HCT116 (cell line): ENCODE measurements at regions of chr12 and their contacts with region 1.

Region 1: DNA sequence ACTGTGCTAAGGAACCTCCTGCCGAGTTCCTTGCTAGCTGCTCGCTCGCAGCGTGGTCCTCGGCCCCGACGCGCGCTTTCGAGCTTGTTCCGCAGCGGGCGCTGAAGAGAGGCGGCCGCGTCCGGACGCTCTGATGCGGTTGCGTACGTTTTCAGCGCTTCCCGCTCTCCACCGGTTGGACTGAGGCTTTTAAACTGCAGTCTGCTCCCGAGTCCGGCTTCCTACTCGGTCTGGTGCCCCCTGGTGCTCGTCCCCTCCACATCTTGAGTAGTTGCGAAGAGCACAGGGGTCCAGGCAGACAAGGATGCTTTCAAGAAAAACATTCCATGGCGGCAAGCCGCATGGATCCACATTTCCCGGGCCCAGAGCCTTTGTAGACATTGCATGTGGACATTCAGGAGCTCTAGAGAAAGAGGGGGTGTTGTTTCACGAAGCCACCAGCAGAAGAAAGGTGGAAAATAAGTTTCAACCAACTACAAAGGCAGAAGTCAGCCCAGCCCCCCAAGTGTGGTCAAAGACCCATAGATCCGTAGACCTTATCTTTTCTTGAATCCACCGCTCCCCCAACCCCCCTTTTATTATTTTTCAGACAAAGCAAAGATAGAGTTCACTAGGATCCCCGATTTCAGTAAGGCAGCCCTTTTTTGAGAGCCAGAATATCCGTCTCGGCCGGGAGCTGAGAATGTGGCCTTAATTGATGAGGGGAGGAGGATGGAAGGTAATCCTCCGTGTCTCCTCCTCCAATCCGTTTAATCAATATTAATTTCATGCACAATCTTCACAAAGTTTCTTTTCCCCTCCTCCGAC is 984 bp upstream of the WNK1 start:
- DNase-seq: peak; percentile 93
- ATAC-seq: peak; percentile 67
- H3K4me3 ChIP-seq: peak overlapping the region; percentile 46 to 75
- H3K27ac ChIP-seq: peak overlapping the region; percentile 62
- H3K4me1 ChIP-seq: peaks cover 15 to 35% of the 10 kb centered on the region in 2 experiments; a peak in 3 of 4 replicates
- H3K27me3 ChIP-seq: no peaks in the 10 kb centered on the region
- CTCF ChIP-seq: peak; percentile 68 to 81 (median 78)
- POLR2A ChIP-seq: peak; percentile 49
- RAD21 ChIP-seq: peak; percentile 77

Region 2: DNA sequence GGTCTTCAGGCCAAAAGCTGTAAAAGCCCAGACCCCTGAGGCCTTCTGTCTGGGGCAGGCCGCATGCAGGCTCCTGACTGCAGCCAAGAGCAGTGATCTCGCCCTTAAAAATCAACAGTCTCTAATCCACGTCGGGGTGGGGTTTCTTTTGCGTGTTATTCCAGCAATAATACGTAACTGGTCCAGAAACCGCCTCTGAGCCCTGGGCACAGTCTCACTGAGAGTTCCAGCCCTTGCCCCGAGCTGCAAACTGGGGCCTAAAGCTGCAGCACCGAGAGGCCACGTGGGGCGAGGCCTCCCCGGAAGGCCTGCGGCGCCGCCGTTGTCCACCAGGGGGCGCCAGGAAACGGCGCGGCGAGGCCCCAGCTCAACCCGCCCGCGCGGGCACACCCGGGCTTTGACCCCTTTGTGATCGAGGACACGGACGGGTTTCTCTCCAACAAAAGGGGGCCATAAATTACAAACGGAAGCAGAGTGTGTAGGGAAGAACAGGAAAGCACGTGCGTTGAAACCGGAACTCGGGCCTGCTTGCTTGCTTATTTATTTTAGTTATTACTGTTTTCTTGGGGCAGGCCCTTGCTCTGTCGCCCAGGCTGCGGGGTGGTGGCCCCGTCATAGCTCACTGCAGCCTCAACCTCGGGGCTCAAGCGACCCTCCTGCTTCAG is 175.3 kb before region 1 on chr12:
- CTCF ChIA-PET with region 1: interaction called, 41 read pairs
- POLR2A ChIA-PET with region 1: interaction called, 23 read pairs
- RAD21 ChIA-PET with region 1: interaction called, 3 to 4 read pairs
- intact Hi-C with region 1: loop called (anchors 1 kb)
- DNase-seq: peak; percentile 41
- ATAC-seq: peak; percentile 72
- H3K4me3 ChIP-seq: no peak overlapping the region
- H3K27ac ChIP-seq: peak overlapping the region; percentile 31
- H3K4me1 ChIP-seq: peaks cover 33 to 52% of the 10 kb centered on the region in 2 experiments
- H3K27me3 ChIP-seq: no peaks in the 10 kb centered on the region
- CTCF ChIP-seq: peak in 2 of 3 experiments; percentile 94 to 98; a peak in 4 of 6 replicates
- POLR2A ChIP-seq: no peak
- RAD21 ChIP-seq: no peak

Region 3: DNA sequence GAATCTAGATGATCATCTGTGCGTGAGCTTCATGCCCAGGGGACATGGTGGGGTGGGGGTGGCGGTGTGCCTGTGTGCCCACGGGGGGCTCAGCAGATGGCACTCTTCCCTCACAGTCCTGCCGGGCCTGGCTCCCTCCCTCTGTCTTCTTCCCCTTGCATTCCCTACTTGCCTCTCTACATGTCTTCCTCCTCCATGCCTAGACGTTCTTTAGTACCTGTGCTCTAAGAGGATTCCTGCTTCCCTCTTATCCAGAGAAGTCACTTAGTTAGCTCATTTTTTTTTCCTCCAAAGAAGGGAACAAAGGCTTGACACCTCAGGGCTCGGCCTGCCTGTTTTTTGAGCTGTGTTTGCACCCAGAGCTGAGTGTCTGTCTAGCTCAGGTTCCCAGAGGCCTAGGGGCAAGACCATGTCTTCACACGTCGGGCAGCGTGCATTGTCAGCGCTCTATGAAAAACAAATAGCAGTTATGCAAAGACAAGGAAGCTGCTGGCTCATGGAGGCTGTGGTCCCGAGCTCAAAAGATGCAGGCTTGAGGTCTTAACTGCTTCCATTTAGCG is 136.9 kb before region 1 on chr12:
- CTCF ChIA-PET with region 1: interaction called, 12 read pairs
- POLR2A ChIA-PET with region 1: interaction called, 3 read pairs
- RAD21 ChIA-PET with region 1: no interaction called
- intact Hi-C with region 1: no loop called
- DNase-seq: no peak
- ATAC-seq: peak; percentile 67
- H3K4me3 ChIP-seq: no peak overlapping the region
- H3K27ac ChIP-seq: no peak overlapping the region
- H3K4me1 ChIP-seq: peaks cover 0 to 8% of the 10 kb centered on the region in 2 experiments; a peak in 2 of 4 replicates
- H3K27me3 ChIP-seq: no peaks in the 10 kb centered on the region
- CTCF ChIP-seq: peak; percentile 13 to 23 (median 17); a peak in 3 of 6 replicates
- POLR2A ChIP-seq: no peak
- RAD21 ChIP-seq: peak; percentile 64

Region 4: DNA sequence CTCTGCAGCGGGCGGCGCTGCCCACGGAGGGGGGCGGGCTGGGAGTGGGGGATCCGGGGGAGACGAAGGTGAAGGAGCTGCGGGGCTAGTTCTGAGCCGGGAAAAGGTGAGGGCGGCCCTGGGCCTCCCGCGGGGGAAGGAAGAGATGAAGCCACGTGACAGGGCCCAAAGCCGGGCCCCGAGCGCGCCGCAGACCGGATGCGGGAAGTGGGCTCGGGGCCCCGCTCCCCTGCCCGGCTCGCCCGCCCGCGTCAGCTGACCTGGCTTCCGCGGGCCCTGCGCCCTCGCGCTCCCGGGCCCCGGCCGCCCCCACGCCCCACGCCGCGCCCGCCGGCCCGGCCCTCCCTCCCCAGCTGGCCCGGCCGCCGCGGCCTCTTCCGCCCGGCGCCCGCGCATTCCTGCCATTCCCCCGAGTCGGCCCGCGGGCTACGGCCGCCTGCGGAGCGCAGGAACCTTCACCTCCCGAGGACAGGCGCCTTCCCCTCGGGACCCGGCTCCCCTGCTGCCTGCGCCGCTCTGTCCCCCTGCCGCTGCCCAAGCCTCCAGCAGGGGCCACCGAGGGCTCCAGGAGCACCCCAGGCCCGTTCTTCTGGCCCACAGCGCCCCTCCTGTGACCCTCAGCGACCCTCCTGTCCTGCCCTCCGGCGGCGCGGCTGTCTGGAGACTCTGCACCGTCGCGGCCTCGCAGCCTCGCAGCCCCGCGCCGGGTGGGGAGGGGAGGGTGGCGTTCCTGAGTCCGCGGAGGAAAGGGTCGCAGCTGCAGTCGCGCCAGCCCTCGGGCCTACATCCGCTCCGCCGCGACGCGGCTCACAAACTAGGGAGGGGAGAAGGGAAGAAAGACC is 108.5 kb before region 1 on chr12:
- CTCF ChIA-PET with region 1: interaction called, 3 read pairs
- POLR2A ChIA-PET with region 1: interaction called, 8 read pairs
- RAD21 ChIA-PET with region 1: no interaction called
- intact Hi-C with region 1: loop called (anchors 5 kb)
- DNase-seq: no peak
- ATAC-seq: peak; percentile 81
- H3K4me3 ChIP-seq: peak overlapping the region; percentile 44 to 55
- H3K27ac ChIP-seq: peak overlapping the region; percentile 61
- H3K4me1 ChIP-seq: peaks cover 10 to 47% of the 10 kb centered on the region in 2 experiments
- H3K27me3 ChIP-seq: no peaks in the 10 kb centered on the region
- CTCF ChIP-seq: peak in 2 of 3 experiments; percentile 29 to 40; a peak in 2 of 6 replicates
- POLR2A ChIP-seq: peak; percentile 30
- RAD21 ChIP-seq: no peak

Region 5: GRCh38 chr12:949453-950191 is 198.2 kb after region 1 on chr12 and contains the start of gene RAD52:
- CTCF ChIA-PET with region 1: interaction called, 4 read pairs
- POLR2A ChIA-PET with region 1: no interaction called
- RAD21 ChIA-PET with region 1: no interaction called
- intact Hi-C with region 1: loop called (anchors 2 kb)
- DNase-seq: peak; percentile 97
- ATAC-seq: peak; percentile 93
- H3K4me3 ChIP-seq: peak within 1 kb of the TSS; percentile 57 to 94
- H3K27ac ChIP-seq: peak within 1 kb of the TSS; percentile 86
- H3K4me1 ChIP-seq: peaks cover 5 to 14% of the 10 kb centered on the region in 2 experiments
- H3K27me3 ChIP-seq: no peaks in the 10 kb centered on the region
- CTCF ChIP-seq: peak; percentile 92 to 98 (median 95)
- POLR2A ChIP-seq: peak; percentile 91
- RAD21 ChIP-seq: peak; percentile 90
- total RNA-seq, gene RAD52: 24.4 TPM